T-cell (primary cell): ENCODE measurements at regions of chr5 and their contacts with region 1.

Region 1: GRCh38 chr5:169838688-169839087 is 141.6 kb downstream of the INSYN2B start:
- DNase-seq: no peak
- ATAC-seq: no peak
- H3K4me3 ChIP-seq: no peak overlapping the region
- H3K4me3 Mint-ChIP-seq: no peak overlapping the region
- H3K27ac ChIP-seq: no peak overlapping the region
- H3K27ac Mint-ChIP-seq: no peak overlapping the region
- H3K4me1 ChIP-seq: no peaks in the 10 kb centered on the region
- H3K4me1 Mint-ChIP-seq: peaks cover 6 to 8% (median 7%) of the 10 kb centered on the region in 3 donors
- H3K27me3 ChIP-seq: no peaks in the 10 kb centered on the region
- H3K27me3 Mint-ChIP-seq: no peaks in the 10 kb centered on the region

Region 2: GRCh38 chr5:170466988-170467707 is 628.5 kb after region 1 on chr5:
- CTCF ChIA-PET with region 1: interaction called in 1 of 2 experiments, 10 read pairs
- POLR2A ChIA-PET with region 1: no interaction called
- DNase-seq: no peak
- ATAC-seq: peak in 2 of 4 experiments; percentile 33 to 40
- H3K4me3 ChIP-seq: no peak overlapping the region
- H3K4me3 Mint-ChIP-seq: no peak overlapping the region
- H3K27ac ChIP-seq: no peak overlapping the region
- H3K27ac Mint-ChIP-seq: no peak overlapping the region
- H3K4me1 ChIP-seq: no peaks in the 10 kb centered on the region
- H3K4me1 Mint-ChIP-seq: no peaks in the 10 kb centered on the region
- H3K27me3 ChIP-seq: peaks cover 0 to 12% of the 10 kb centered on the region in 2 experiments
- H3K27me3 Mint-ChIP-seq: peaks cover 8% of the 10 kb centered on the region in 2 donors